Left lung (tissue), 14 donors: ENCODE measurements at regions of chr1 and their contacts with region 1.

Region 1: DNA sequence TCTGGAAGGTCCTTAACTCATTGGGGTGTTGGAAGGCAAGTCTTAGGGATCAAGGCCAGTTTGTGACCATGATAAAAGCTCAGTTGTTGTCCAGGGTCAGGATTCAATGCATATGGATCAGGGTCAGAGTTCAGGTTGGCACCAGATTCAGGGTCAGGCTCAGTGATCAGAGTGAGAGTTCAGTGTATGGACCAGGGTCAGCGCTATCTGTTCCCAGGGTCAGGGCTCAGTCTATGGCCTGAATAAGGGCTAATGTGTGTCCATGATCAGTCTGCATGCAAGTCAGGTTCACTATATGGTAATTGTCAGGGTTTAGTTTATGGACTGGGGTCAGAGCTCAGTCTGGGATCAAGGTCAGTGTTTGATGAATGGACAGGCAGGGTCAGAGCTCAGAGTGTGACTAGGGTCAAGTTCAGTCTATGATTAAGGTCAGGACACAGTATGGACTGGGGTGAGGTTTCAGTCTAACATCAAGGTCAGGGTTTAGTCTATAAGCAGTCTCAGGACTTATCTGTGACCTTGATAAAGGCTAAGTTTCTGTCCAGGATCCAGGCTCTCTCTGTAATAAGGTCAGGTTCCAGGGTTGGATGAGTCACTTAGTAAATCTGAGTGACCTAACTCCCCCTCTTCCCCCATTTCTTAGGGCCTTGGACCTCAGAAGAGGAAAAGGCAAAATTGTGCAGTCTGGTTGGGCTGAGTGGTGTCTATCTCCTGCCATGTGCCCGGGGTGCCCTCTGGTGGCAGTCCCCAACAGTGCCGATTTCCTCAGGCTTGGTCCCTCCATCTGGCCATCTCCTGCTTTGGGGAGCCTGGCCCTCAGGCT is 23.8 kb downstream of the KNCN start:
- DNase-seq: peak; percentile 59 to 91 (median 78)
- ATAC-seq: peak; percentile 95
- H3K4me3 ChIP-seq: no peak overlapping the region
- H3K27ac ChIP-seq: no peak overlapping the region
- H3K4me1 ChIP-seq: peaks cover 2 to 5% of the 10 kb centered on the region in 2 donors
- H3K27me3 ChIP-seq: peaks cover 0 to 87% of the 10 kb centered on the region in 2 donors
- CTCF ChIP-seq: peak; percentile 85 to 90

Region 2: GRCh38 chr1:46021046-46021996 is 506.4 kb before region 1 on chr1:
- intact Hi-C with region 1: no loop called
- DNase-seq: no peak
- ATAC-seq: no peak
- H3K4me3 ChIP-seq: no peak overlapping the region
- H3K27ac ChIP-seq: no peak overlapping the region
- H3K4me1 ChIP-seq: no peaks in the 10 kb centered on the region
- H3K27me3 ChIP-seq: no peaks in the 10 kb centered on the region
- CTCF ChIP-seq: no peak

Region 3: DNA sequence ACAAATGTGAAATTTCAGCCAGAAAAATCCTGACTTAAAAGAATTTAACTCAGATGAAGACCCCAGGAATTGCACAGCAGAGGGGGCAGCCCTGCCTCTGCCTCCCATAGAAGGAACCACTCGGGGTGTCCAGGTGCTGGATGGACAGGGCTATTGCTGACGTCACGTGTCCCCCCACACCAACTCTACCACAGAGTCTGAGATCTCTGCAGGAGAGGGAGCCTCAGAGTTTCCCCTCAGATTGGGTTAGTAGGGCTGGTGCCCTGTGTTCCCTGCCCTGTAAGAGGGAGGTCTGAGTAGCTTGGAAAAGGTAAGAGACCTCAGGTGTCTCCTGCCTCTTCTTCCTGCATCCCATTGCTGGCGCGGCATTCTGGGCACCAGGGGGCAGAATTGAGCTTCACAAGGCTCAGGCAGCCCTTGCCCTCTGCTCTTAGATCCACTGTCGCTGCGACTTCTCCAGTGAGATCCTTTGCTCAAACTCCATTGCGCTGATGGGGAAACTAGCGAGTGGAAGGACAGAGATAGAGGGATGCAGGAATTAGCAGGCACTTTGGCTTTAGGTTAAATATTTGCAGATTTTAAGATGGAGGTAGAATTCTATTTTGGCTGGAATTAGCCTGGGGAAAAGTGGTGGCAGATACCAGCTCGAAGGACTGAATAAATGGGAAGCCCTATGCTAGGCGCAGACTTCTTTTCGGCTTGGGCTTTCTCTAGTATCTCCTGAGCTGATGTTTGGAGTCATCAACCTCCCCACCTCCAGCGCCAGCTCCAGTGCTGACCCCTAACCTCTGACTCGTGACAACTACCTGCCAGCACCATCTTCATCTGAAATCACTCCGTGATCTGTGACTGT is 80.8 kb before region 1 on chr1:
- intact Hi-C with region 1: loop called in 1 of 2 experiments (anchors 2 kb)
- DNase-seq: peak; percentile 59 to 90 (median 70)
- ATAC-seq: peak; percentile 69
- H3K4me3 ChIP-seq: no peak overlapping the region
- H3K27ac ChIP-seq: no peak overlapping the region
- H3K4me1 ChIP-seq: peaks cover 0 to 24% of the 10 kb centered on the region in 2 donors
- H3K27me3 ChIP-seq: peaks cover 31 to 71% of the 10 kb centered on the region in 2 donors
- CTCF ChIP-seq: peak; percentile 75 to 81

Region 4: DNA sequence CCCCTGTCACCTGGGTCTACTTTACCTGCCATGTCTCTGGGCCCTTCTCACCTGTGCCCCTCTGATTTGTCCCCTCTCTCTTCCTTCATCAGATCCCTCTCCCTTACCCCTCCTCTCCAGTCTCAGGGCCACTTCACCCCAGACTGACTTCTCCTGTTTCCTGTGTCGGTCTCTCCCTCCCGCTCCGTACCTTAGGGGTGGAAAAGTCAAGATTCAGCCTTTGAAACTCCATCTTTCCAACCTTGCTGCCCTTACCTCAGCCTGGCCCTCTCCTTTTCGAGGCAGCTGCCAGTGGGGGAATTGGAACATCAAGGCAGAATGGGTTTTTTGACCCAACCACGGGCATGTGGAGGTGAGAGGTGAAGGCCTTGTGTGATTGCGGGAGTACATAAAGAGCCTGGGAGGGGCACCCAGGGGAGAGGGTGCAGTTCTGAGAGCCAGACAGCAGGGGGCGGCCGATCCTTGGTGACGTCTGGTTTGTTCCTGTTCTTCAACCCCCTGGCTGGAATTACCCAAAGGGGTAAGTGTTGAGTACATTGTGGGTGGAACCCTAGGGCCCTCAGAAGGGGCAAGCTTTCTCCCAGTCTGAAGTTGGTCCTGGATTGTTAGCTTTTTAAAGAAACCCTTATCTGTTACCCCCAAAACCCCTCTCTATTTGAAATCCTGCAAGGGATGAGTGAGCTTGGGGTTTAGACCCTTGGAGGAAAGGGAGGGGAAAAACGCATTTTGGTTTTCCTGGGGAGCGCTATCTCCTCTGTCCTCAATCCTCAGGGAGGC is 50.3 kb before region 1 on chr1:
- intact Hi-C with region 1: loop called in 1 of 2 experiments (anchors 5 kb)
- DNase-seq: peak in 3 of 4 donors; percentile 73 to 92 (median 79)
- ATAC-seq: peak; percentile 97
- H3K4me3 ChIP-seq: no peak overlapping the region
- H3K27ac ChIP-seq: no peak overlapping the region
- H3K4me1 ChIP-seq: no peaks in the 10 kb centered on the region
- H3K27me3 ChIP-seq: peaks cover 0 to 84% of the 10 kb centered on the region in 2 donors
- CTCF ChIP-seq: peak; percentile 92 to 98

Region 5: GRCh38 chr1:46724991-46725735 is 197.5 kb after region 1 on chr1:
- intact Hi-C with region 1: loop called in 1 of 2 experiments (anchors 10 kb)
- DNase-seq: peak in 3 of 4 donors; percentile 54 to 85 (median 56)
- ATAC-seq: peak; percentile 99
- H3K4me3 ChIP-seq: no peak overlapping the region
- H3K27ac ChIP-seq: no peak overlapping the region
- H3K4me1 ChIP-seq: peaks cover 0 to 9% of the 10 kb centered on the region in 2 donors
- H3K27me3 ChIP-seq: peaks cover 0 to 31% of the 10 kb centered on the region in 2 donors
- CTCF ChIP-seq: peak; percentile 72 to 75